ENCODE measurements at regions of chr12 and their contacts with region 1.

Region 1: GRCh38 chr12:121399391-121400331 is at the start of gene RNF34:
- DNase-seq: peak; percentile 99
- ATAC-seq: peak; percentile 92 to 94
- H3K4me3 ChIP-seq: peak within 1 kb of the TSS; percentile 90 to 97 (median 93)
- H3K27ac ChIP-seq: peak within 1 kb of the TSS; percentile 97 to 99 (median 98)
- H3K4me1 ChIP-seq: peaks cover 40 to 41% of the 10 kb centered on the region in 2 donors
- H3K27me3 ChIP-seq: no peaks in the 10 kb centered on the region
- CTCF ChIP-seq: peak in 1 of 5 experiments; percentile 25
- POLR2A ChIP-seq: peak; percentile 99
- total RNA-seq, gene RNF34: 32.3 to 57.1 (median 46.2) TPM

Region 2: DNA sequence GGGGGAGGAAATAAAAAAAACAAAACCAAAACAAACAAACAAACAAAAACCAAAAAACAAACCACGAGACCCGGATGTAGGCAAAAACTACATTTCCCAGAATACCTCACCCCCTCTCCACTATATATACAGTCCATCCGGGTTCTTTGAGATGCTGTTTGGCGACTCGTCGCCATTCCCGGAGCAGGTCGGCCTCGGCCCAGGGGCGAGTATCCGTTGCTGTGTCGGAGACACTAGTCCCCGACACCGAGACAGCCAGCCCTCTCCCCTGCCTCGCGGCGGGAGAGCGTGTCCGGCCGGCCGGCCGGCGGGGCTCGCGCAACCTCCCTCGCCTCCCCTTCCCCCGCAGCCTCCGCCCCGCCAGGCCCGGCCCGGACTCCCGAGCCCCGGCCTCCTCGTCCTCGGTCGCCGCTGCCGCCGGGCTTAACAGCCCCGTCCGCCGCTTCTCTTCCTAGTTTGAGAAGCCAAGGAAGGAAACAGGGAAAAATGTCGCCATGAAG is 865.4 kb before region 1 on chr12 and contains the start of gene RNF10:
- in situ Hi-C with region 1: no loop called
- intact Hi-C with region 1: loop called (anchors 10 kb)
- DNase-seq: peak; percentile 77 to 82
- ATAC-seq: peak; percentile 76 to 83
- H3K4me3 ChIP-seq: peak within 1 kb of the TSS; percentile 68 to 89 (median 83)
- H3K27ac ChIP-seq: peak within 1 kb of the TSS; percentile 92 to 99 (median 97)
- H3K4me1 ChIP-seq: peaks cover 38 to 42% of the 10 kb centered on the region in 2 donors
- H3K27me3 ChIP-seq: no peaks in the 10 kb centered on the region
- CTCF ChIP-seq: no peak
- POLR2A ChIP-seq: peak; percentile 99 to 100
- total RNA-seq, gene RNF10: 152 to 282 (median 247) TPM

Region 3: GRCh38 chr12:121296618-121297434 is 102.8 kb before region 1 on chr12 and contains the start of gene CAMKK2:
- in situ Hi-C with region 1: no loop called
- intact Hi-C with region 1: loop called (anchors 5 kb)
- DNase-seq: peak; percentile 58 to 71
- ATAC-seq: peak; percentile 88
- H3K4me3 ChIP-seq: peak within 1 kb of the TSS; percentile 91 to 97 (median 96)
- H3K27ac ChIP-seq: peak within 1 kb of the TSS; percentile 80 to 95 (median 86)
- H3K4me1 ChIP-seq: peaks cover 27 to 28% of the 10 kb centered on the region in 2 donors
- H3K27me3 ChIP-seq: no peaks in the 10 kb centered on the region
- CTCF ChIP-seq: peak in 1 of 5 experiments; percentile 32
- POLR2A ChIP-seq: peak; percentile 39 to 59
- total RNA-seq, gene CAMKK2: 6.0 to 10.2 (median 7.5) TPM

Region 4: DNA sequence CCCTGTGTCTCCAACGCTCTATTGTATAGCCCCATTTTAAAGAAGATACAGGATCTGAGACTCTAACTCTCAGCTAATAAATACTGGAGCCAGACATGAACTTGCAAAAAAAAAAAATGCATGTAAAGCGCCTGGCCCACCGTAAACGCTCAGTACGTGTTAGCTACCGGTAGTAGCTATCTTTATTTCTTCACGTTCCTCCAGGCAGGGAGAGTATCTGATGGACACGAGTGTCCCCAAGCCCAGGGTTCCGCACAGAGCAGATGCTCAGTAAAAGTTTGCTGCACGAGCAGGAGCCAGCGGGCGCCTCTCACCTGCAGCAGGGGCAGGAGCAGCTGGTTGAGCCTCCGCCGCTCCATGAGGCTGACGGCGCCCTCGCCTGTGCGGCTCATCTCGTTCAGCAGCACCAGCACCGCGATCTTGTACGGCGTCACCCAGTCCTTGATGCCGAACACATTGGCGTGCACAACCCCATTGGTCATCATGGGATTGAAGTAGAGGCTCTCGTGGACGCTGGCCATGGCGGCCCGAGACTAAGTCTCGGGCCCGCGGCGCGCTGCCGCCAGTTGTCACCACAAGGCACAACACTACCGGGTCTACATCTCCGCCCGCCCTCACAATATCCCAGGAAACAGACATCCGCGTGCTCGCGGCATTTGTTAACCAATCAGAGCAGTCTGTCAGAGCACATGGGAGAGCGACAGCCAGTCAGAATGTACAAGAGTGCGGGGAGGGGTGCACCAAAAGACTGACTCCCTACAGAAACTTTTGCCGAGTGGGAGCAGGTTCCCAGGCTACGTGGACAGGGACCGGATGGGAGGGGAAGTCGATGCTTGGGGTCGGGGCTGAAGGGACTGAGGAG is 47.6 kb before region 1 on chr12 and contains the start of gene ANAPC5:
- in situ Hi-C with region 1: no loop called
- intact Hi-C with region 1: loop called (anchors 1 kb)
- DNase-seq: peak; percentile 97 to 98
- ATAC-seq: peak; percentile 100
- H3K4me3 ChIP-seq: peak within 1 kb of the TSS; percentile 76 to 97 (median 86)
- H3K27ac ChIP-seq: peak within 1 kb of the TSS; percentile 81 to 89 (median 89)
- H3K4me1 ChIP-seq: peaks cover 11 to 18% of the 10 kb centered on the region in 2 donors
- H3K27me3 ChIP-seq: no peaks in the 10 kb centered on the region
- CTCF ChIP-seq: peak in 3 of 5 experiments; percentile 11 to 38 (median 28)
- POLR2A ChIP-seq: peak; percentile 71 to 87
- total RNA-seq, gene ANAPC5: 84.1 to 128 (median 91.8) TPM

Region 5: DNA sequence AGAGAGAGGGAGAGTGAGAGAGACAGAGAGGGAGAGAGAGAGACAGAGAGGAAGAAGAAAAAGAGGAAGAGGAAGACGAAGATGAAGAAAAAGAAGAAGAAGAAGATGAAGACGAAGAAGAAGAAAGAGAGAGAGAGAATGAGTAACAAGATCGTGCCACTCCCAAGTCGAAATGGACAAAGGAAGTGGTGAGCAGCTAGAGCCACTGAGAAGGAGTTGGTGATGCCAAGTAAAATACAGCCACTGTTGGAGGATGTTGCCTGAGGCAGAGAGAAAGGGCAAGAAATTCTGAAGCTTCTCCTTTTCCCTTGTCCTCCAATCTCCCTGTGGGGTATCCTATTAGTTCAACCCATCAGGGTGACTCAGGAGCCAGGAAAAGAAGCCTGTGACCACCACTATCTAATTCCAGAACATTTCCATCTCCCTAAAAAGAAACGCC is 35.0 kb before region 1 on chr12:
- in situ Hi-C with region 1: loop called in 1 of 4 experiments (anchors 5 kb)
- intact Hi-C with region 1: loop called (anchors 1 kb)
- DNase-seq: no peak
- ATAC-seq: no peak
- H3K4me3 ChIP-seq: no peak overlapping the region
- H3K27ac ChIP-seq: no peak overlapping the region
- H3K4me1 ChIP-seq: peaks cover 2 to 7% of the 10 kb centered on the region in 2 donors
- H3K27me3 ChIP-seq: no peaks in the 10 kb centered on the region
- CTCF ChIP-seq: no peak
- POLR2A ChIP-seq: no peak

Region 6: GRCh38 chr12:121423682-121424623 is 24.3 kb after region 1 on chr12:
- in situ Hi-C with region 1: no loop called
- intact Hi-C with region 1: loop called (anchors 1 kb)
- DNase-seq: peak; percentile 93 to 96
- ATAC-seq: peak; percentile 90 to 95
- H3K4me3 ChIP-seq: no peak overlapping the region
- H3K27ac ChIP-seq: peak overlapping the region; percentile 81 to 97 (median 94)
- H3K4me1 ChIP-seq: peaks cover 17 to 28% of the 10 kb centered on the region in 2 donors
- H3K27me3 ChIP-seq: no peaks in the 10 kb centered on the region
- CTCF ChIP-seq: peak in 1 of 5 experiments; percentile 22
- POLR2A ChIP-seq: peak; percentile 43 to 80

Region 7: DNA sequence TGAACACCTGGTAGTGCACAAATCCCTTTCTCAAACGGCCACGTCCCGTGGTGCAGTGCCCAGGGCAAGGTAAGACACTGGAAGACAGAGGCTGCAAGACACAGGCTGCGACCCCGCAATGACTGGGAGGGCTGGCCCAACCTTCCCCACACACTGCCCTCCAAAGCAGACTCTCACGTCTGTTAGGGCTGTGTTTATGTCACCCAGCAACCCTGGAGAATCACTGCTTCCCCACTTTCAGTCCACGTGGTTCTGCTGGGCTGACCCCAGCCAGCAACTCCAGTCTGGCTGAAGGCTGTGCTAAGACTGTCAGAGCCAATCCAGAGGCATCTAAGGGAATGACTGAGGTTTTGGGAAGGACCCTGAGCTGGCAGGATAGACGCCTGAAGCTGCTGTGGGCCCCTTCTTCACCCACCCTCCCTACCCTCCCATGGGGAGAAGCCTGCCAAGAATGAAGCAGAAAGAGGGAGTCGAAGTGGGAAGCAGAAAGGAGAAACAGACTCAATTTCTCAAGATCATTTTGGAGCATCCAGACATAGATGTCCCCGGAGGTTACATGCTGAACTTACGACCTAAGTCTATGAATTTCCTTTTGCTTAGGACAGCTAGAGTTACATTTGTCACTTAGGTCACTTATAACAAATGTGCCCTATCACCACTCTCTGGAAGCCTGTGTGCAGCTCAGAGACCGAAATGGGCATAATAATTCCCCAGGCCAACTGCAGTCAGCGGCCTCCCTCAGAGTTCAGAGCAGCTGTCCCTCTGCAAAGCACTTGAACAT is 169.5 kb after region 1 on chr12:
- in situ Hi-C with region 1: no loop called
- intact Hi-C with region 1: no loop called
- DNase-seq: peak in 1 of 2 donors; percentile 41
- ATAC-seq: peak; percentile 57 to 70
- H3K4me3 ChIP-seq: peak overlapping the region in 1 of 4 donors; percentile 6
- H3K27ac ChIP-seq: peak overlapping the region; percentile 70 to 73 (median 72)
- H3K4me1 ChIP-seq: peaks cover 15 to 27% of the 10 kb centered on the region in 2 donors
- H3K27me3 ChIP-seq: no peaks in the 10 kb centered on the region
- CTCF ChIP-seq: no peak
- POLR2A ChIP-seq: no peak

Measured in gastrocnemius medialis (tissue), 4 donors.